Adrenal gland (tissue), 19 donors: ENCODE measurements at regions of chr6 and their contacts with region 1.

Region 1: DNA sequence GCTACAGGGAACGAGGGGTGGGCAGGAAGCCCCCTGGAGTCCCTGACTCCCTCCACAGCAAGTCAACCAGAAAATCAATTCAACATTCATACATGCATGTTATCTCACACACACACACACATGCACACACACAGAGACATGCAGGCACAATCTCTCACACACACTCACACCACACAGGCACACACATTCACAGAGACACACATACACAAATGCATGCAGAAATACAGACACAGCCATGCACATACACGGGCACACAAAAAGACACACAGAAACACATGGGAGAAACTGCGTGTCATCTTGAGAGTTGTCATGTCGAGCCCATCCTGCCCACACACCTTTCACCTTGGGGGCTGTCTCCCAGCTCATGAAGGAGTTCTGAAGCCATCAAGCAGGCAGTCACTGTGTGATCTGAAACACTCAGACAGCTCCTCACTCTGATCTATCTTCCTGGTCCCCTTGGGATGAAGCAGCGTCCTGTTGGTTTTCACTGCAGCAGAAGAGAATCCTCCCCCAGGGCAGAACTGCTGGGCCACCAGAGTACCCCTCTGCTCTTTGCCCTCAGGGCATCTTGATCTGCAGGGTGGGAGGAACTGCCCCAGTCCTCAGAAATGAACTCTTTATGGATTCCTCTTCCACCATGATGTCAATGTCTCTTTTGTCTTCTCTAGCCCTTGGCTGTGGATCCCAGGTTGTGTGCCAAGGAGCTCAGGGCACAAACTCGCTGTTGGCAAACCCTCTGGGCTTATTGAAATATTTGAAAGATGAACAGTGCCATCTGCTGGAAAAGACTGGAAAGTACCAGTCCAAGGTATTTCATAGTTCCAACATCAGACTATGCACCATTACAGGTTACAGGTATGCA is 8.8 kb downstream of the RAET1L start:
- DNase-seq: peak; percentile 64 to 85 (median 78)
- H3K4me3 ChIP-seq: no peak overlapping the region
- H3K27ac ChIP-seq: no peak overlapping the region
- H3K4me1 ChIP-seq: no peaks in the 10 kb centered on the region
- H3K27me3 ChIP-seq: peaks cover 41% of the 10 kb centered on the region
- CTCF ChIP-seq: peak; percentile 57 to 88 (median 80)
- POLR2A ChIP-seq: no peak

Region 2: GRCh38 chr6:149717588-149718458 is 298.7 kb before region 1 on chr6 and contains the start of gene LATS1:
- intact Hi-C with region 1: no loop called
- DNase-seq: peak; percentile 90 to 96 (median 94)
- H3K4me3 ChIP-seq: peak within 1 kb of the TSS; percentile 72 to 98 (median 74)
- H3K27ac ChIP-seq: peak within 1 kb of the TSS; percentile 91 to 100 (median 98)
- H3K4me1 ChIP-seq: peaks cover 3 to 33% of the 10 kb centered on the region in 2 donors
- H3K27me3 ChIP-seq: no peaks in the 10 kb centered on the region
- CTCF ChIP-seq: no peak
- POLR2A ChIP-seq: peak; percentile 87 to 88
- total RNA-seq, gene LATS1: 19.4 to 39.6 (median 26.5) TPM

Region 3: DNA sequence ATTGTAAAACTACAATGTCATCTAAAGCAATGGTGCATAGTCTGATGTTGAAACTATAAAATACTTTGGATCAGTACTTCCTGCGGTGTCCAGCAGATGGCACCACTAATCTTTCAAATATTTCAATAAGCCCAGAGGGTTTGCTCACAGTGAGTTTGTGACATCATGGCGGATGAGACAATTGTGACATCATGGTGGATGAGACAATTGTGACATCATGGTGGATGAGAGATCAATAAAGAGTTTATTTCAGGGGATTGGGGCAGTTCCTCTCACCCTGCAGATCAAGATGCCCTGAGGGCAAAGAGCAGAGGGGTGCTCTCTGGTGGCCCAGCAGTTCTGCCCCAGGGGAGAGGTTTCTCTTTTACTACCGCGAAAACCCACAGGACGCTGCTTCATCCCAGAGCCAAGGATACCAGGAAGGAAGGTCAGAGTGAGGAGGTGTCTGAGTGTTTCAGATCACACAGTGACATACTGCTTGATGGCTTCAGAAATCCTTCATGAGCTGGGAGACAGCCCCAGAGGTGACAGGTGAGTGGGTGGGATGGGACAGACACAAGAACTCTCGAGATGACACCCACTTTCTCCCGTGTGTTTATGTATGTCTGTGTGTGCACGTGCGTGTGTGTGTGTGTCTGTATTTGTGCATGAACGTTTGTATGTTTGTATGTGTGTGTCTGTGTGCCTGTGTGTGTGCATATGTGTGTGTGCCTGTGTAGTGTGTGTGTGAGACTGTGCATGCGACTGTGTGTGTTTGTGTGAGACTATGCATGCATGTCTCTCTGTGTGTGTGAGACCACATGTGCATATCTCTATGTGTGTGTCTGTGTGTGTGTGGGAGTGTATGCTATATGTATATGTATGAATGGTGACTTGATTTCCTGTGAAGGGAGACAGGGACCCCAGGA is 82.1 kb before region 1 on chr6:
- intact Hi-C with region 1: loop called (anchors 2 to 5 kb)
- DNase-seq: peak in 6 of 7 donors; percentile 56 to 90 (median 75)
- H3K4me3 ChIP-seq: no peak overlapping the region
- H3K27ac ChIP-seq: no peak overlapping the region
- H3K4me1 ChIP-seq: peaks cover 0 to 11% of the 10 kb centered on the region in 2 donors
- H3K27me3 ChIP-seq: peaks cover 79% of the 10 kb centered on the region
- CTCF ChIP-seq: peak; percentile 58 to 90 (median 88)
- POLR2A ChIP-seq: no peak

Region 4: DNA sequence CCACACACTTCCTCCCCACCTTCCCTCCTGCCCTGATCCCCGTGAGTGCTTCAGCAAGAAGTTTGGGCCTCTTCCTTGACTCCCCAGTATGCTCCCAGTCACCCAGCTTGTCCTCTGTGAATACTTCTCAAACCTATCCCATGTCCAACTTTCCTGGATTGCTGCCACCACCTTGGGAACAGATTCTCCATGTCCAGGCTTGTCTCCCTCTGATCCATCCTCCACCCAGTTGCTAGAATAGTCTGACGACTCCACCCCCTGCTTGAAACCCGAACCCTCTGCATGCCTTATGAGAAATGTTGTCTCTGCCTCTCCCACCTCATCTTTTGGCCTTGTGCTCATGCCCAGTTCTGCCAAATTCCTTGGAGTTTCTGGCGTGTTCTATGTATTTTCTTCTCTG is 234.3 kb after region 1 on chr6:
- intact Hi-C with region 1: no loop called
- DNase-seq: no peak
- H3K4me3 ChIP-seq: no peak overlapping the region
- H3K27ac ChIP-seq: no peak overlapping the region
- H3K4me1 ChIP-seq: no peaks in the 10 kb centered on the region
- H3K27me3 ChIP-seq: no peaks in the 10 kb centered on the region
- CTCF ChIP-seq: no peak
- POLR2A ChIP-seq: no peak